CD4-positive, alpha-beta memory T cell (primary cell): ENCODE measurements at regions of chr2 and their contacts with region 1.

Region 1: DNA sequence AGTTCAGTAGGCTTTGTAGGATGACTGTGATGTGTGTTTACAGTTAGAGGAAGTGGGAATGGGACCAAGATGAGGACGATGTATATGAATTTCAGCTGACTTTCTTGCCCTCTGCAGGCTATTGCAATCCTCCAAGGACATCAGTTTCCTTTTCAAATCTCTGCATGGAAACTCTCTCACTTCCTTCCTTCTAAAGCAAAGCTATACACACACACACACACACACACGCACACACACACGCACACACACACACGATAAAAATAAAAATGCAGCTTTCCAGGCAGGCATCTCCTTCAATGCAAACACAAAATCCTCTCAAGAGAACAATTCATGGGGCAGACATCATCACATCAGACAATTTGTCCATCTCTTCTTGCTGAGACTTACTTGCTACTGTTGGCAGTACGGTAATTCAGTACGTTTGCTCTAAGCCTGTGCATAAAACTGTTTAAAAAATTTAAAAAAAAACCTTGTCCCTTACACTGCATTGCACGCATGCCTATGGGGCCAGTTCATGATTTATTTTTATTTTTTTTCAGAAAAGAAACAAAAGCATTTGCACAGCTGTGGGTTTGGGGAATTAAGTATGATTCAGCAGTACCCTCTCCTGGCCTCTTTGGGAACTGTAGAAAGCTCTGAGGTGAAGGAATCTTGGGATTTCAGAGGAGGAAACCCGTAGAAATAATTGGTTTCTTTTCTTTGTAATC is 27.1 kb upstream of the ICOS start:
- DNase-seq: peak in 4 of 5 donors; percentile 42 to 51 (median 48)
- H3K4me3 ChIP-seq: no peak overlapping the region
- H3K4me3 Mint-ChIP-seq: peak overlapping the region; percentile 9 to 80 (median 69)
- H3K27ac ChIP-seq: no peak overlapping the region
- H3K27ac Mint-ChIP-seq: peak overlapping the region in 3 of 7 donors; percentile 49 to 93 (median 68)
- H3K4me1 ChIP-seq: peaks cover 18% of the 10 kb centered on the region
- H3K4me1 Mint-ChIP-seq: peaks cover 6 to 25% (median 15%) of the 10 kb centered on the region in 4 donors
- H3K27me3 ChIP-seq: no peaks in the 10 kb centered on the region
- H3K27me3 Mint-ChIP-seq: no peaks in the 10 kb centered on the region

Region 2: GRCh38 chr2:203225423-203226039 is 683.9 kb before region 1 on chr2:
- CTCF ChIA-PET with region 1: no interaction called
- POLR2A ChIA-PET with region 1: no interaction called
- intact Hi-C with region 1: loop called (anchors 5 kb)
- DNase-seq: peak in 4 of 5 donors; percentile 20 to 37 (median 28)
- H3K4me3 ChIP-seq: no peak overlapping the region
- H3K4me3 Mint-ChIP-seq: no peak overlapping the region
- H3K27ac ChIP-seq: no peak overlapping the region
- H3K27ac Mint-ChIP-seq: no peak overlapping the region
- H3K4me1 ChIP-seq: no peaks in the 10 kb centered on the region
- H3K4me1 Mint-ChIP-seq: no peaks in the 10 kb centered on the region
- H3K27me3 ChIP-seq: no peaks in the 10 kb centered on the region
- H3K27me3 Mint-ChIP-seq: no peaks in the 10 kb centered on the region

Region 3: GRCh38 chr2:203718087-203718486 is 191.3 kb before region 1 on chr2:
- CTCF ChIA-PET with region 1: no interaction called
- POLR2A ChIA-PET with region 1: no interaction called
- intact Hi-C with region 1: no loop called
- DNase-seq: peak; percentile 65 to 82 (median 70)
- H3K4me3 ChIP-seq: peak overlapping the region in 1 of 2 donors; percentile 32
- H3K4me3 Mint-ChIP-seq: peak overlapping the region; percentile 75 to 92 (median 80)
- H3K27ac ChIP-seq: peak overlapping the region; percentile 52
- H3K27ac Mint-ChIP-seq: peak overlapping the region; percentile 94 to 98 (median 95)
- H3K4me1 ChIP-seq: peaks cover 100% of the 10 kb centered on the region
- H3K4me1 Mint-ChIP-seq: peaks cover 86 to 99% (median 93%) of the 10 kb centered on the region in 4 donors
- H3K27me3 ChIP-seq: no peaks in the 10 kb centered on the region
- H3K27me3 Mint-ChIP-seq: no peaks in the 10 kb centered on the region

Region 4: GRCh38 chr2:203782262-203782976 is 127.0 kb before region 1 on chr2:
- CTCF ChIA-PET with region 1: interaction called, 5 read pairs
- POLR2A ChIA-PET with region 1: interaction called, 3 read pairs
- intact Hi-C with region 1: loop called (anchors 1 kb)
- DNase-seq: peak; percentile 67 to 79 (median 69)
- H3K4me3 ChIP-seq: no peak overlapping the region
- H3K4me3 Mint-ChIP-seq: peak overlapping the region in 3 of 8 donors; percentile 24 to 66 (median 30)
- H3K27ac ChIP-seq: no peak overlapping the region
- H3K27ac Mint-ChIP-seq: peak overlapping the region in 6 of 7 donors; percentile 44 to 85 (median 70)
- H3K4me1 ChIP-seq: peaks cover 20% of the 10 kb centered on the region
- H3K4me1 Mint-ChIP-seq: peaks cover 31 to 55% (median 40%) of the 10 kb centered on the region in 4 donors
- H3K27me3 ChIP-seq: no peaks in the 10 kb centered on the region
- H3K27me3 Mint-ChIP-seq: no peaks in the 10 kb centered on the region

Region 5: GRCh38 chr2:203871371-203871983 is 37.9 kb before region 1 on chr2:
- CTCF ChIA-PET with region 1: interaction called, 29 read pairs
- POLR2A ChIA-PET with region 1: interaction called, 12 read pairs
- intact Hi-C with region 1: no loop called
- DNase-seq: no peak
- H3K4me3 ChIP-seq: peak overlapping the region; percentile 17 to 54
- H3K4me3 Mint-ChIP-seq: peak overlapping the region; percentile 85 to 95 (median 90)
- H3K27ac ChIP-seq: peak overlapping the region; percentile 59
- H3K27ac Mint-ChIP-seq: peak overlapping the region; percentile 41 to 89 (median 81)
- H3K4me1 ChIP-seq: peaks cover 84% of the 10 kb centered on the region
- H3K4me1 Mint-ChIP-seq: peaks cover 58 to 87% (median 74%) of the 10 kb centered on the region in 4 donors
- H3K27me3 ChIP-seq: no peaks in the 10 kb centered on the region
- H3K27me3 Mint-ChIP-seq: no peaks in the 10 kb centered on the region